Activated B cell treated with CpG ODN at 0.5 μM for 24 hours (primary cell): ENCODE measurements at regions of chr16 and their contacts with region 1.

Region 1: DNA sequence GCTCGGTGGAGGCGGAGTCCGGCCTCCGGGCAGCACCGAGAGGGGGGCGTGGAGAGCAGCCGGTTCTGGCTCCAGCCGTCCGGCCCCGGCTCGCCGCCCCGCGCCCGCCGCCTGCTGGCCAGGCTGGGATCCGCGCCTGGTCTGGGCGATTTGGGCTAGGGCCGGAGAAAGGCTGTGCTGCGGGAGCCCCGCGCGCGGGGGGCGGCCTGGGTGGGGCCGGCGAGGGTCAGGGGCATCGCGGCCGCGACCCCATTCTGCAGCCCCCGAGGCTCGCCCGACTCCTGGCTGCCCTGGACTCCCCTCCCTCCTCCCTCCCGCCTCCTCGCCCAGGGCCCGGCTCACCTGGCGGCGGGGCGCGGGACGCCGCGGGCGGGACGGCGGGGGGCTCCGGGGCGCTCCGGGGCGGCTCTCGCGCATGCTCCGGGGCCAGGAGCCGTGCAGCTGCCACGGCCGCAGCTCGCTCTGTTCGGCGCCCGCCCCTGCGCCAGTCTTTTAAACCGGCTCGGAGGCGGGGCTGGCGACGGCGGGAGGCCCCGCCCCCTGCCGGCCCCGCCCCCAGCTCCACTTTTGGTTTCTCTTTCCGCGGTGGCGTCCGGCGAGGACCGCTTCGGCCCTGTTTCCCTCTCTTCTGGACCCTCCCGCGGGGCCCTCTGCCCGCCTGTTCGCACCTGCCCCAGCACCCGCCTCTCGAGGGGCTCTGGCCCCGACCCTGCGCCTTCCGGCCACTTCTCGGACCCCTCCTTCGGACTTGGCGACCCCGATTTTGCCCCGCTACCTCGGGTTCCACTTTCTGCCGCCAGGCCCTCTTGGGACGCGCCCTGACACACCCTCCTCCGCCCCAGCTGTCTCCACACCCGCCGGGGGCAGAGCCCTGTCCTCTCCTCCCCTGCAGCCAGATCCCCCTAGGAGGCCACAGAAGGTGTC is at the start of gene SOCS1:
- DNase-seq: peak; percentile 92
- ATAC-seq: peak; percentile 71
- H3K4me3 Mint-ChIP-seq: peak within 1 kb of the TSS; percentile 98
- H3K27ac Mint-ChIP-seq: peak within 1 kb of the TSS; percentile 98
- H3K4me1 Mint-ChIP-seq: peaks cover 60% of the 10 kb centered on the region
- H3K27me3 Mint-ChIP-seq: no peaks in the 10 kb centered on the region
- CTCF ChIP-seq: peak; percentile 46
- total RNA-seq, gene SOCS1: 68.6 and 76.2 TPM in 2 replicates

Region 2: DNA sequence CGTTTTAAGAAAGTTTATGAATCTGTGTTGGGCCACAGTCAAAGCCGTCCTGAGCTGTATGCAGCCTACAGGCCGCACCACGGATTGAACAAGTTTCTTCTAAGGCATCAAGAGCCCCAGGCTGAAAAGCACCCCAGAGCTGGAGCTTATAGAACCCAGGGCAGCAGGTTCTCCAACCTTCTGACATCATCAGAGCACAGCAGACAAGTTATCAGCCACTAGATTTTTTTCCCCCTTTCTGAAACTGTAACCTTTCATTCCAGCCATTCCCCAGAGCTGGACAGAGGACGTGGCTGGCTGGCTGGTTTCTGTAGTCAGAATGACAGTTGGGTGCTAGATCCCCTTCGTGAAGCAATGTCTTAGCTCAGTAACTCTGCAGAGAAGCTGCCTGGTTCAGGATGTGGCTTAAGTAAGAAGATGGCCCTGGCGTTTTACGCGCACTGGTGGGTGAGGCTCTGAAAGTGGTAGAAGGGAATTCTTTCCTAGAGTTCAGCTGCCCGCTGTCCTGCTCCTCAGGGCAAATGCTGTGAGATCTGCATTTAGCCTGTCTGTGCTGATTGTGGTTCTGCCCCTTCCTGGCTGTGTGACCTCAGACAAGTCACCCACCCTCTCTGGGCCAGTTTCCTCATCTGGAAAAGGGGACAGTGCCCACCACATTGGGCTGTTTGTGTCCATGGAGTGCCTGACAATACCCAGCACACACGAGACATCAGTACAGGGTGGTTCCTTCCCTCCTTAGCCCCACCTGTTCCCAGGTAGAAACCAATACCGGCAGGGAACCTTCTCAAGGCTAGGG is 322.9 kb before region 1 on chr16:
- CTCF ChIA-PET with region 1: no interaction called
- POLR2A ChIA-PET with region 1: no interaction called
- intact Hi-C with region 1: no loop called
- DNase-seq: no peak
- ATAC-seq: no peak
- H3K4me3 Mint-ChIP-seq: no peak overlapping the region
- H3K27ac Mint-ChIP-seq: peak overlapping the region; percentile 69
- H3K4me1 Mint-ChIP-seq: peaks cover 77% of the 10 kb centered on the region
- H3K27me3 Mint-ChIP-seq: no peaks in the 10 kb centered on the region
- CTCF ChIP-seq: no peak

Region 3: DNA sequence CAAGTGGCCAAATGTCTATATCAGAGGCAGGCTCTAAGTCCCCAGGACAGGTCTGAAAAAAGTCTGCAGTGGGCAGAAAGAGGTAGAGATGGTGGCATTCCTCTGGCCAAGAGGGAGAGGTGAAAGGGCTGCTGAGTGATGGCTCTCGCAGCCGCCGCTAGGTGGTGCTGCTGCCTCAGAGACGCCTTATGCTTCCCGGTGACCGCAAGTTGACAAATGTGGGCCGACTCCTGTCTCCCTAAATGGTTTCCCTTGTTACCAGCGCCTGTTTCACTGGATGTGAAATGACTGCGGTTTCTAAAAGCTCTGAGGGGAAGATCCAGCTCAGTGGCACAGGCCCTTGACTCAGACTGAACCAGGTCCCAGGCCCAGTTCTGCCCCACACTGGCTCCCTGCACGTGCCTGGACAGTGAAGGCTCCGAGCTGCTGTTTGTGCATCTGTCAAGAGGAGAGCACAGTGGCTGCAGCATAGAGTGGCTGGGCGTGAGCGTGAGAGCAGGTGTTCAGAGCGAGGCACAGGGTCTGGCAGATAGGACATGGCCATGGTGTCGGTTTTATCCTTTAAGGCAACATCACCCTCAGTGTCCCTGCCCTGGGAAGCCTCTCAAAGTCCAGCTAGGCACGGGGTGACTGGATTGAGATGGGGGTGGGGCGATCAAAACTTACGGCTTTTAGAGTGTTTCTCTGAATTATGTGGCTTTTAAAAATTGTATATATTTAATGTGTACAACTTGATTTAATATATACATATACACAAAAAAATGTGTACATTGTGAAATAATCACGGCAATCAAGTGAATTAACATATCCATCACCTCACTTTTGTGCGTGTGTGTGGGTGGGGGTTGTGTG is 291.7 kb before region 1 on chr16:
- CTCF ChIA-PET with region 1: interaction called, 62 read pairs
- POLR2A ChIA-PET with region 1: interaction called, 169 read pairs
- intact Hi-C with region 1: loop called (anchors 1 kb)
- DNase-seq: peak; percentile 78
- ATAC-seq: peak; percentile 35
- H3K4me3 Mint-ChIP-seq: peak overlapping the region; percentile 66
- H3K27ac Mint-ChIP-seq: peak overlapping the region; percentile 94
- H3K4me1 Mint-ChIP-seq: peaks cover 52% of the 10 kb centered on the region
- H3K27me3 Mint-ChIP-seq: no peaks in the 10 kb centered on the region
- CTCF ChIP-seq: peak; percentile 93

Region 4: GRCh38 chr16:11076259-11077018 is 179.6 kb before region 1 on chr16:
- CTCF ChIA-PET with region 1: interaction called, 14 read pairs
- POLR2A ChIA-PET with region 1: interaction called, 78 read pairs
- intact Hi-C with region 1: loop called (anchors 1 kb)
- DNase-seq: no peak
- ATAC-seq: peak; percentile 70
- H3K4me3 Mint-ChIP-seq: peak overlapping the region; percentile 51
- H3K27ac Mint-ChIP-seq: peak overlapping the region; percentile 95
- H3K4me1 Mint-ChIP-seq: peaks cover 83% of the 10 kb centered on the region
- H3K27me3 Mint-ChIP-seq: no peaks in the 10 kb centered on the region
- CTCF ChIP-seq: no peak

Region 5: DNA sequence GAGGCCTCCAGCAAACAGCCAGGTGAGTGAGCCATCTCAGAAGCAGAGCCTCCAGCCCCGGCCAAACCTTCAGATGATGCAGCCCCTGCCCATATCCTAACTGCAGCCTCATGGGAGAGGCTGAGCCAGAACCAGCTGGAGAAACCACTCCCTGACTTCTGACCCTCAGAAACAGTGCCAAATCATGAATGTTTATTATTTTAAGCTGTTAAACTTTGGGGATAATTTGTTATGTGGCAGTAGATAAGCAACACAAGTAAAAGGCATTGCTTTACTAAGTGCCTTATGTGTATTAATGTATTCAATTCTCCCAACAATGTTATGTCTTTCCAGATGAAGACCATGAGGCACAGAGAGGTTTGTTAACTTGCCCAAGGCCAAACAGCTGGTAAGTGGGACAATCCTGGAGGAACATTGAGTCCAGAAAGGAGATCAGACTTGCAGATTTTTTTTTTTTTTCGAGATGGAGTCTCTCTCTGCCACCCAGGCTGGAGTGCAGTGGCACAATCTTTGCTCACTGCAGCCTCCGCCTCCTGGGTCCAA is 59.6 kb before region 1 on chr16:
- CTCF ChIA-PET with region 1: interaction called, 7 read pairs
- POLR2A ChIA-PET with region 1: interaction called, 36 read pairs
- intact Hi-C with region 1: no loop called
- DNase-seq: no peak
- ATAC-seq: no peak
- H3K4me3 Mint-ChIP-seq: no peak overlapping the region
- H3K27ac Mint-ChIP-seq: no peak overlapping the region
- H3K4me1 Mint-ChIP-seq: peaks cover 5% of the 10 kb centered on the region
- H3K27me3 Mint-ChIP-seq: peaks cover 7% of the 10 kb centered on the region
- CTCF ChIP-seq: no peak

Region 6: GRCh38 chr16:11297492-11298142 is 41.6 kb after region 1 on chr16:
- CTCF ChIA-PET with region 1: interaction called, 94 read pairs
- POLR2A ChIA-PET with region 1: interaction called, 197 read pairs
- intact Hi-C with region 1: loop called (anchors 1 kb)
- DNase-seq: peak; percentile 85
- ATAC-seq: peak; percentile 97
- H3K4me3 Mint-ChIP-seq: peak overlapping the region; percentile 73
- H3K27ac Mint-ChIP-seq: peak overlapping the region; percentile 85
- H3K4me1 Mint-ChIP-seq: peaks cover 72% of the 10 kb centered on the region
- H3K27me3 Mint-ChIP-seq: no peaks in the 10 kb centered on the region
- CTCF ChIP-seq: no peak

Region 7: DNA sequence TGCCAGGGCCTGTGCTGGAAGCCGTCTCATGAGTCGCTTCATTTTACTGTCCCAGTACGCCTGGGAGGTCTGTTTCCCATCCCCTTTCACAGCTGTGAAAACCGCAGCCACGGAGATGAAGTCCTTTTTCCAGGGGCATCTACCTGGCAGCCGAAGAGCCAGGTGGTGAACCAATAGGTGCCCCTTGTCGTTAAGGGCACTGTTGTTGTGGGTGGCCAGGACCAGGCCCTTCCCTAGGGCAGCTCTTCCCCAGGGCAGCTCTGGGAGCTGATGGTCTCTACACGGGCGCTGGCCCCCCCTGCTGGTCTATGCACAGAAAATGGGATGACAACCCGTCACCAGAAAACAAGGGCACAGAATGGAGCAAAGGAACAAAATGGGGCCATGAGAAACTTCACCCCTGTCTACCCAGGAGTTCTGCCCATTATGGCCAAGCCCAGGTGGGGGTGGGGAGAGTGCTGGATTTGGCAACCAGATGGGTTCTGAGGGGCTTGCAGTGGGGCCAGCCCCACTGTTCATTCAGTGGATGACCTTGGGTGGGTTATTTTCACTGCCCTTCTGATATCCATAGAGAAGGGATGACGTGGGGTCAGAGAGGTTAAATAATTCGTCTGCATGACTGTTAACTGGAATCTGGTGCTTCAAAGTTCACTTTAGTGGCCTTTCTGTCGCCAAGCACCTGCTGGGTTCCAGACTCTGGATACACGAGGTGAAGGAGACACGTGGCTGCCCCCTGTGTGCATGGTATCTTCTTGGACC is 100.8 kb after region 1 on chr16:
- CTCF ChIA-PET with region 1: interaction called, 98 read pairs
- POLR2A ChIA-PET with region 1: interaction called, 252 read pairs
- intact Hi-C with region 1: loop called (anchors 1 kb)
- DNase-seq: peak; percentile 46
- ATAC-seq: peak; percentile 30
- H3K4me3 Mint-ChIP-seq: no peak overlapping the region
- H3K27ac Mint-ChIP-seq: no peak overlapping the region
- H3K4me1 Mint-ChIP-seq: peaks cover 58% of the 10 kb centered on the region
- H3K27me3 Mint-ChIP-seq: peaks cover 21% of the 10 kb centered on the region
- CTCF ChIP-seq: no peak

Region 8: GRCh38 chr16:11576427-11577289 is 320.7 kb after region 1 on chr16:
- CTCF ChIA-PET with region 1: no interaction called
- POLR2A ChIA-PET with region 1: no interaction called
- intact Hi-C with region 1: no loop called
- DNase-seq: no peak
- ATAC-seq: peak; percentile 78
- H3K4me3 Mint-ChIP-seq: peak overlapping the region; percentile 52
- H3K27ac Mint-ChIP-seq: peak overlapping the region; percentile 62
- H3K4me1 Mint-ChIP-seq: peaks cover 90% of the 10 kb centered on the region
- H3K27me3 Mint-ChIP-seq: no peaks in the 10 kb centered on the region
- CTCF ChIP-seq: no peak

Region 9: DNA sequence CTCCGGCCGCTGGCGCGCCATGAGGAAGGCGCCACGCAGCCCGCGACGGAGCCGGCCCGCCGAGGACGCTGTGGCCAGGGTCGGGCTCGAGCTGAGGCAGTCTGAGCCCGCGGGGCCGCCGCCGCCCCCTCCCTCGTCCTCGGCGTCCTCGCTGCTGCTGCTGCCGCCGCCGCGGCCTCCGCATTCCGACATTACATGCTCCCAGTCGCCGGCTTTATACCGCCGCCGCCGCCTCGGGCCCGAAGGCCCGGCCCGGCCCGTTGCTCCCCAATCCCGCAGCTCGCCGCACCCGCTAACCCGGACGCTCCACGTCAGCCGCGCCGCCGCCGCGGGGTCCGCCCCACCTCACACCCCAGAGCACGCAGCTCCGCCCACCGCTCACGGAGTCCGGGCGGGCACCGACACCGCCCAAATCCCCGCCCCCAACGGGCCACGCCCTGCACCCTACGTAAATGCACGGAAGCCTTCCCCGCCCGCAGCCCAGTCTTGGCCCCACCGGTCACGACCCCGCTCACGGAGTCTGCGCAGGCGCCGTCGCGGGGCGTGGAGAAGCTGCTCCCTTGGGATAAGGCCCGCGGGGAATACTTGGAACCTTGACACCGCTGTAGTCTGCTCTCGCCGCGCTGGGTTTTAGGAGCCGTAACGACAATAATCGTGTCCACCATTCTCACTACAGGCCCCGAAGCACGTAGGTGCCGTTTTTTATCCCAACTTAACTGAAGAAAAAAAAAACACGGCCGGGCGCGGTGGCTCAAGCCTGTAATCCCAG is 486.7 kb after region 1 on chr16 and contains the start of gene TXNDC11:
- CTCF ChIA-PET with region 1: no interaction called
- POLR2A ChIA-PET with region 1: interaction called, 10 read pairs
- intact Hi-C with region 1: no loop called
- DNase-seq: peak; percentile 100
- ATAC-seq: peak; percentile 91
- H3K4me3 Mint-ChIP-seq: peak within 1 kb of the TSS; percentile 89
- H3K27ac Mint-ChIP-seq: peak within 1 kb of the TSS; percentile 89
- H3K4me1 Mint-ChIP-seq: peaks cover 58% of the 10 kb centered on the region
- H3K27me3 Mint-ChIP-seq: no peaks in the 10 kb centered on the region
- CTCF ChIP-seq: no peak
- total RNA-seq, gene TXNDC11: 54.3 and 63.2 TPM in 2 replicates